ENCODE measurements at regions of chr7 and their contacts with region 1.

Region 1: DNA sequence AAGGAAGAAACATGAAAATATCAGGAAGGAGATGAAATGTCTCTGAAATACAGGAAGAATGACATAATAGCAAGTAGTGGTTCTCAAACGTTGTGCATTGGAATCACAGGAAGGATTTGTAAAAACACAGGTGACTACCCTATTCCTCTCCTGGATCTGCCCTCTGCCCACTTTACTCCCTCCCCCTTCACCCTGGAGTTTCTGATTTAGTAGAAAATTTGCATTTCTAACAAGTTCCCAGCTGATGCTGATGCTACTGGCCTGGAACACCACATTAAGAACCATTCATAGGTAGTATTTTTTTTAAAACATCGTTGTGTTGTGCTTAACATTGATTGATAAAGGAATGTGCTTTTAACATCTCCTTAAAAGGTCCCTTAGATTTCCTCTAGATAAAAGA is 130.9 kb downstream of the PHF14 start:
- DNase-seq: no peak
- ATAC-seq: peak; percentile 55; the same call in 2 of the 3 replicates
- H3K4me3 ChIP-seq: no peak overlapping the region
- H3K27ac ChIP-seq: no peak overlapping the region
- H3K4me1 ChIP-seq: no peaks in the 10 kb centered on the region
- H3K27me3 ChIP-seq: no peaks in the 10 kb centered on the region
- CTCF ChIP-seq: no peak
- EP300 ChIP-seq: no peak
- POLR2A ChIP-seq: no peak
- RAD21 ChIP-seq: no peak

Region 2: DNA sequence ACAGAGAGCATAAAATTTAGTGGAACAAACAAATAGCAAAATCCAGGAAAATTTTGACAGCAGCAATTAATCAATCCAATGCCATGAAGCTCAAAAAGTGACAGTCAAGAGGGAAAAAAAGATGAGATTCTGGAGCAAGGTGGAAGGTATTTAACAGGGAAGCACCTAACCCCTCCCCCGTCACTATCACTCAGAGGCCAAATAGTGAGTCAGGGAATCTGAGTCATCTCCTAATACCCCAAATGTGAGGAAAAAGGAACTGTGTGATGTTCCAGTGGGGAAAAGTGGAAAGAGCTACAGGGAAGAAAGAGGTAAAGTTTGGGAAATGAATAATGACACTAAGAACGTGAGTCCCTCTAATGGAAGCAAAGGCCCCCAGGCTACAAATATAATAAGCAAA is 244.1 kb before region 1 on chr7:
- CTCF ChIA-PET with region 1: no interaction called
- POLR2A ChIA-PET with region 1: no interaction called
- RAD21 ChIA-PET with region 1: no interaction called
- SMC1A ChIA-PET with region 1: no interaction called
- in situ Hi-C with region 1: no loop called
- intact Hi-C with region 1: no loop called
- DNase-seq: no peak
- ATAC-seq: no peak
- H3K4me3 ChIP-seq: no peak overlapping the region
- H3K27ac ChIP-seq: no peak overlapping the region
- H3K4me1 ChIP-seq: no peaks in the 10 kb centered on the region
- H3K27me3 ChIP-seq: no peaks in the 10 kb centered on the region; a peak in 1 of 4 replicates
- CTCF ChIP-seq: no peak
- EP300 ChIP-seq: no peak
- POLR2A ChIP-seq: no peak
- RAD21 ChIP-seq: no peak

Region 3: GRCh38 chr7:11120068-11120664 is 15.6 kb after region 1 on chr7:
- CTCF ChIA-PET with region 1: interaction called, 3 read pairs
- POLR2A ChIA-PET with region 1: no interaction called
- RAD21 ChIA-PET with region 1: no interaction called
- SMC1A ChIA-PET with region 1: interaction called, 14 read pairs
- in situ Hi-C with region 1: no loop called
- intact Hi-C with region 1: no loop called
- DNase-seq: no peak
- ATAC-seq: peak; percentile 79
- H3K4me3 ChIP-seq: peak overlapping the region; percentile 51; the same call in 1 of the 2 replicates
- H3K27ac ChIP-seq: peak overlapping the region; percentile 78
- H3K4me1 ChIP-seq: peaks cover 7% of the 10 kb centered on the region; the same call in 1 of the 2 replicates
- H3K27me3 ChIP-seq: no peaks in the 10 kb centered on the region
- CTCF ChIP-seq: no peak
- EP300 ChIP-seq: no peak
- POLR2A ChIP-seq: no peak
- RAD21 ChIP-seq: no peak

Measured in GM12878 (cell line).